Prostate gland (tissue), 2 donors: ENCODE measurements at regions of chr4 and their contacts with region 1.

Region 1: DNA sequence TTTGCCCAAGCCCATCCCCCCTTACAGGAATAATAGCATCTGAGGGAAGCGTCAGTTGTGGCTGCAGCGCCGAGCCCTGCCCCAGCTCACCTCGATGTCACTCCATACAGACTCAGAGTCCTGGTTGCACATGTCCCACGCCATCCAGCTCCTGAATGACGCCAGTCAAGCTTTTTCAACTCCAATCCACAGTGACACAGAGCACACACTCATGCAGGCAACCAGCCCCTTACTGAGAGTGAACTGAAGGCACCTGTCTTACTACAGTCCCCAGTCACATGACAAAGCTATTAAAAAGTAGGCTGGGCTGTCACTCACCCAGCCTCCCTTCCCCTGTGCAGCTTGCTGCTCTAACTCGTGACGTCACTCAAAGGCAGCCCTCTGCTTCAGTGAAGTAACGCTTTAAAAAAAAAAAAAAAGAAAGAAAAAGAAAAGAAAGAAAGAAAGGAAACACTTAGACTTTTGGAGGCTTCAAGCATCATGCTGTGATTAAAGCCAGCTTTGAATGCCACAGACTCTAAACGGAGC is at the start of gene PPARGC1A:
- DNase-seq: peak; percentile 67
- H3K4me3 ChIP-seq: peak within 1 kb of the TSS; percentile 28 to 34
- H3K27ac ChIP-seq: peak within 1 kb of the TSS; percentile 60 to 62
- H3K4me1 ChIP-seq: no peaks in the 10 kb centered on the region
- H3K27me3 ChIP-seq: no peaks in the 10 kb centered on the region
- CTCF ChIP-seq: no peak
- POLR2A ChIP-seq: peak; percentile 46
- total RNA-seq, gene PPARGC1A: 9.2 to 14.7 TPM

Region 2: GRCh38 chr4:23934915-23935314 is 45.0 kb after region 1 on chr4:
- intact Hi-C with region 1: loop called (anchors 5 kb)
- DNase-seq: peak; percentile 90
- H3K4me3 ChIP-seq: no peak overlapping the region
- H3K27ac ChIP-seq: no peak overlapping the region
- H3K4me1 ChIP-seq: no peaks in the 10 kb centered on the region
- H3K27me3 ChIP-seq: no peaks in the 10 kb centered on the region
- CTCF ChIP-seq: peak in 2 of 4 experiments; percentile 24 to 35
- POLR2A ChIP-seq: no peak